Activated CD8-positive, alpha-beta memory T cell treated with anti-CD3 and anti-CD28 coated beads, Interleukin-2, amount 10 ng/mL, durations not matched to agents 7 days and 5 days (primary cell): ENCODE measurements at regions of chr19 and their contacts with region 1.

Region 1: DNA sequence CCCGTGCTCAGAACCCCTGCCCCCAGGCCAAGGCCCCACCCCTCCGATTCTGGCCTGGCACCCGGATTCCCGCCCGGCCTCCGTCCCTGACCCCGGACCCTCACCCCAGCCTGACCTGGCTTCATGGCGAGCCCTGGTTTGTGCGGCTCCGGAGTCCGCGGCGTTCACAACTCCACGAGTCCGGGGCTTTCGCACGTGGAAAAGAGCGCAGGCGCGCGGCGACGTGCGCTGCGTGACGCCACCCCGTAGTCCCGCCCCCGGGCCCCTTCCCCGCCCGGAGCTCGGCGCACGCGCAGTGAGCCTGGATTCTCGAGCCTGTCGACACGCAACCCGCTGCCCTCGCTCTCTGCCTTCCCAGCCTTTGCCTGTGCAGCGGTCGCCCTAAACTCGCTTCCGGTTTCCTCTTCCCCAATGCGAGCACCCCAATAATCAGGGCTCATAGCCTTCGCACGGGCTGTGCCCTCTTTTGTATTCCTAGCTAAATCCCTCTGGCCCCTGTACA is at the start of gene FBL:
- DNase-seq: peak; percentile 98
- ATAC-seq: peak; percentile 90
- H3K4me3 Mint-ChIP-seq: peak within 1 kb of the TSS; percentile 88
- H3K27ac Mint-ChIP-seq: peak within 1 kb of the TSS; percentile 90
- H3K4me1 Mint-ChIP-seq: peaks cover 42% of the 10 kb centered on the region
- H3K27me3 Mint-ChIP-seq: no peaks in the 10 kb centered on the region
- total RNA-seq, gene FBL: 374 to 453 TPM

Region 2: GRCh38 chr19:39671738-39672363 is 174.4 kb before region 1 on chr19:
- CTCF ChIA-PET with region 1: interaction called, 80 read pairs
- DNase-seq: peak; percentile 64
- ATAC-seq: peak; percentile 65
- H3K4me3 Mint-ChIP-seq: no peak overlapping the region
- H3K27ac Mint-ChIP-seq: no peak overlapping the region
- H3K4me1 Mint-ChIP-seq: peaks cover 31% of the 10 kb centered on the region
- H3K27me3 Mint-ChIP-seq: peaks cover 27% of the 10 kb centered on the region

Region 3: GRCh38 chr19:39792999-39793546 is 53.2 kb before region 1 on chr19:
- CTCF ChIA-PET with region 1: interaction called, 150 read pairs
- DNase-seq: peak; percentile 82
- ATAC-seq: peak; percentile 95
- H3K4me3 Mint-ChIP-seq: peak overlapping the region; percentile 75
- H3K27ac Mint-ChIP-seq: peak overlapping the region; percentile 43
- H3K4me1 Mint-ChIP-seq: peaks cover 26% of the 10 kb centered on the region
- H3K27me3 Mint-ChIP-seq: peaks cover 18% of the 10 kb centered on the region

Region 4: GRCh38 chr19:39828015-39828653 is 18.1 kb before region 1 on chr19:
- CTCF ChIA-PET with region 1: interaction called, 70 read pairs
- DNase-seq: no peak
- ATAC-seq: no peak
- H3K4me3 Mint-ChIP-seq: peak overlapping the region; percentile 37
- H3K27ac Mint-ChIP-seq: peak overlapping the region; percentile 80
- H3K4me1 Mint-ChIP-seq: peaks cover 26% of the 10 kb centered on the region
- H3K27me3 Mint-ChIP-seq: no peaks in the 10 kb centered on the region

Region 5: DNA sequence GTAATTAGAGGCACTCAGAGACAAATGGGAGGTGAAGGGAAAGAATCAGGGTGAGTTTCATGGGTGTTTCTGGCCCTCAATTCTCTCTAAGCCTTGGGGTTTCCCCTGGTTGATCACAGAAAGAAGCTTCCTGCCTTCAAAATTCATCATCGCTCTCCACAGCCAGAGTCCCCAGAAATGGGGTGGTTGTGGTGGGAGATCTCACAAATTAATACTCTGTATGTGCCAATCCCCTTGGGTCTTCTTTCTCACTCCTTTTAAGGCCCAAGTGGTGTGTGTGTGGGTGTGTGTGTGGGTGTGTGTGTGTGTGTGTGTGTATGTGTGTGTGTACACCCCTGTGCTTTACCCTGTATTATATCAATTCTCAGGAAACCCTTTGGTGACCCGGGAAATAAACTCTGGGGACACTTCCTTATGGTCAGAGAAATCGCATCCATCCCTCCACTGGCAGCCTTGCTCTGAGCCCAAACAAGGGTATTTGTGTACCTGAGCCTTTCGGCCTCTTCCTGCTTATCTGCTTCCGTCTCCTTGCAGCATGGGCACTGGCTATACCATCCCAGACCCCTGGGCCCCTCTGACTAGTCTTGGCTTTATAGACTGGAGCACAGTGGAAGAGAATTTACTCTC is 91.0 kb after region 1 on chr19:
- CTCF ChIA-PET with region 1: no interaction called
- DNase-seq: peak; percentile 63
- ATAC-seq: peak; percentile 34
- H3K4me3 Mint-ChIP-seq: no peak overlapping the region
- H3K27ac Mint-ChIP-seq: peak overlapping the region; percentile 50
- H3K4me1 Mint-ChIP-seq: peaks cover 53% of the 10 kb centered on the region
- H3K27me3 Mint-ChIP-seq: no peaks in the 10 kb centered on the region

Region 6: DNA sequence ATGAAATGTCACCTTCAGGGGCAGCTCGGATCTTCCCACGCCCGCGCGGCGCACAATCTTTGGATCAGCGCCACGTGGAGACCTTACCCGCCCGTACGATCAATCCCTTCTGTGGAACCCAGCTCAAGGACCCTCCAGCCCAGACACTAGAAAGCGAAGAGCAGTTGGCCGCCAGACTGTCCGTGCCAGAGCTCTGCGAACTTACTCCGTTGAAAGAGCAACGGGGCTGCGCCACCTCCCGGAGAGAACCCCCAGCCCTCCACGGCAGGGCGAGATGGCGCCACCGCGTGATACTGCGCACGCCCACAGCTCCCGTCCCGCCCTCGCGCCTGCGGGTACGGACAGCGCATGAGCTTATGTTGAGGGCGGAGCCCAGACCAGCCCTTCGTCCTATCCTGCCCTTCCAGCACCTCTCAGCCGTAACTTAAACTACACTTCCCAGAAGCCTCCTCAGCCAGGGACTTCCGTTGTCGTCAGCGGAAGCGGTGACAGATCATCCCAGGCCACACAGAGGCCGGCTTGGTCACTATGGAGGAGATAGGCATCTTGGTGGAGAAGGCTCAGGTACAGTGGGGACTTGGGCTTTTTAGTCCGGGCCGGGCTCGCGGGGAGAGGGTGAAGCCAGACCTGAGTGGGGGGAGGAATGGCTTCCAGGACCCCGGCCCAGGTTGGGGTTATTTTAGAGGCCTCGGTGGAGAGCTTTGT is 124.6 kb after region 1 on chr19 and contains the start of gene PSMC4:
- CTCF ChIA-PET with region 1: interaction called, 77 read pairs
- DNase-seq: peak; percentile 99
- ATAC-seq: peak; percentile 98
- H3K4me3 Mint-ChIP-seq: peak within 1 kb of the TSS; percentile 90
- H3K27ac Mint-ChIP-seq: peak within 1 kb of the TSS; percentile 95
- H3K4me1 Mint-ChIP-seq: peaks cover 37% of the 10 kb centered on the region
- H3K27me3 Mint-ChIP-seq: no peaks in the 10 kb centered on the region
- total RNA-seq, gene PSMC4: 94.5 to 141 TPM